Posterior vena cava (tissue), 2 donors: ENCODE measurements at regions of chr9 and their contacts with region 1.

Region 1: GRCh38 chr9:110650991-110651411 is 17.6 kb upstream of the MUSK start:
- DNase-seq: no peak

Region 2: DNA sequence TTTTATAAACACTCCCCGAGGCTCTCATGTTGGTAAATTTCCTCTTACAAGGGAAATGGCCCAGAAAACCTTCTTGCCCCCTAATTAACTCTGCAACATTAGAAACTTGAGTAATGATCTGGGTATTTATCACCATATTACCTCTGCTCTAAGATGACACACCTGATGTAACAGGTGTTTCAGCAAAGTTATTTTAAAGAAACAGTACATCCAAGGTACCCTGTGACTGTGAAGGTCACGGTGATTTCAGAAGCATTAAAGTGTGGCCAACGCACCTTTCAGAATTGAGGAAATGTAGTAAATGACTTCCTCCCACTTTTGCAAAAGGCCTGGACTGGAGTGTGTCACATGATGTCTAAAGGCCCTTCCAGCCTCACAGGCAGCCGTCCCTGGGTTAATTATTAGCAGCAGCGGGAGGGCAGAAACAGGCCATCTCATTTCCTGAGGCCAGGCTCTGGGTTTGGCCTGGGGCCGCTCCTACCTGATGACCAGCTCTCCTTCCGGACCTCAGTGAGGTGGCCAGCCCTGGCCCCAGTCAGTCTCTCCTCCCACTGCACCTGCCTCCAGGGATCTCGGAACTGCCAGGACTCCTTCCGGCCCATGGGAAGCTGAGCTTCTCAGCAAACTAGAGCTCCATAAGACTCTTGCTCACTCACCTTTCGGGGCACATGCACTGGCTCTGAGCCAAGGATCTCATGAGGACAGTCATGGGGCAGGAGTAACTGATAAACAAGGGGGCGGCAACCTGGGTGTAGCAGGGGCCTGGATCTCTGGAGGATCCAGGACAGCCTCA is 1173.5 kb before region 1 on chr9:
- intact Hi-C with region 1: no loop called
- DNase-seq: no peak

Region 3: DNA sequence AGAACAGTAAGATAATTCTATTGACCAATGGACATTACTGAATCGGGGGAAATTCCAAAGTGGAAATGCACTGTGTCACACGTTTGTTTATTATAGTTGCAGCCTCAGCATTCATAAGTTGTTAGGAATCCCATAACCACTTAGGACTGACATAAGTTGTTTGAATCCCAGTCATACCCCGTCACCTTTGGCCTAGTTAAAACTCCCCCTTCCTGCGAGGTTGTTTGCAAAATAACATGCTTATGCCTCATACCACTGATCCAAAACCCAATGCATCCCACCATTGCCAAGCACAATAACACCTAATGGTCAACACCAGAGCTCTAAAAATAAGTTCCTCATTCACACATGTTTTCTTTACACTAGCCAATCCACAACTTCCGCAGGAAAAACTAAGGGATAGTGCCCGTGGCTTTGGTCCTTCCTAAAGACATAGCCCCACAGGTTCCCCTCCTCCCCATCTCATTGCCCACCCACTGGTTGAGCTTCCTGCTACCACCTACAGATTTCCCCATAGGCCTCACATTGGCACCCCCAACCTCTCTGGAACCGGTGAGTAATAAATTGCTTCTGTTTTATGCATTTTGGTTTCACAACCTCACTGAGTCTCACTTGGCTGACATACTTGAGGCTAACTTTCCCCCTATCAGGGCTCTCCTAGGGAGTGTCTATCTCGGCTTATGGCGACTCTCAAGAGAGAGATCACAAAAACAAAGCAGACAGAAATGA is 24.7 kb before region 1 on chr9:
- intact Hi-C with region 1: no loop called
- DNase-seq: no peak

Region 4: DNA sequence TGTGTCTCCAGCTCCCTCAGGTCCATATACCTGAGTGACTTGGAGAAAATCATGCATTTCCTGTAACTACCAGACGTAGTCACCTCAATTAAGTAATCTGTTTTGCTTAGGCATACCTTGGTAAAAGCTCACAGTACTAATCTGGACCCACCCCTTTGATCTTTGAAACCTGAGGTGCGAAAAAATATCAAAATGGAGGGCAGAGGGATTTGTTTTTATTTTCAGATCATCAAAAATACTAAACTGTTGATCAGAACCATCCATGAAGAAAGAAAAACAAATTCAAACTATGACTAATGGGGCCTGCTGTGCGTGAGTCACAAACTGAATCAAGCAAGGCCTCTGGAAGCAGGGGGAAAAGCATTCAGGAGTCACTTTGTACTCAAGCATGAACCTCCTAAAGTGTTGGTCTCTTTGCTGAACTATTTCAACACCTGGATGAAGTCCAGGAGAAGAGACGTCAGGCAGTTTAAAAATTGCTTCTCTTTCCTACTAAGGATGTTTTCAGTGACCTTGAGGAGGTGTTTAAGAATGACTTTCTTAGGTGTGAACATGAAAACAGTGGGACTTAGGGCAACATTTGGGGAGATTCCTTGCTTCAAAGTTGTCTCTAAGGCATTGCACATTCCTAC is 93.9 kb after region 1 on chr9:
- intact Hi-C with region 1: loop called in 1 of 2 experiments (anchors 10 kb)
- DNase-seq: no peak